Heart left ventricle (tissue), 16 donors: ENCODE measurements at regions of chr1 and their contacts with region 1.

Region 1: DNA sequence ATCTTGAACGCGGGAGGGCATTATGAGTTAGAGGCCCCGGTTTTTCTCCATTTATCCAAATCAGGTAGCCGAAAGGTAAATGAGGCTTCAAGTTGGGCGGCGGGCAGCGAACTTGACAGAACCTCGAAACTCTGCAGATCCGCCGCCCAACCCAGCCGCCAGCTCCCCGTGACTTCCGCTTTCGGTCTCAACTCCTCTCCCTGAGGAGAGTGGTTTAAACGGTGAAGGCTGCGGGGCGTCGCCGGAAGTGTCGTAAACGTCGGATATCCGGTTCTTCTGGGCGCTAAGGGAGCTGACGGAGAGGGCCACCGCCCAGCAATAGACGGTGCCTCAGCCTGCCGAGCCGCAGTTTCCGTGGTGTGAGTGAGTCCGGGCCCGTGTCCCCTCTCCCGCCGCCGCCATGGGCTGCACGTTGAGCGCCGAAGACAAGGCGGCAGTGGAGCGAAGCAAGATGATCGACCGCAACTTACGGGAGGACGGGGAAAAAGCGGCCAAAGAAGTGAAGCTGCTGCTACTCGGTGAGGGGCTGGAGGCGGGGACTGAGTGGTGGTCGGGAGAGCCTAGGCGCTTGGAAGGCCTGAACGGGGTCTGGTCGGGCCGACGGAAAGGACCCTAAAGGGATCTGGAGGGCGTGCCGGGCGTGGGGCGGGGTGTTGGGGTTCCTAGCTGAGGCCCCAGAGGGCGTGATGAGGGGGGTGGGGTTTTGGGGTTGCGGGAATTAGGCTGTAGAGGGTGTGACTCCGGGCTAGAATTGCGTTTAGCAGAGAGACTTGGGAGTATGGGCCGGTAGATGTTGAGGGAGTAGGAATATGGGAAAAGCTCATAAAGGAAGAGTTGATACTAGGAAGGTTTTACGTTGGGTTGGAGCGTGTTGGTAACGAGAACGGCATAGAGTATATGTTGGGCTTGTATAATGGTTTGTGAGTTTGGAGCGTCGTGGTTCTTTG is at the start of gene GNAI3:
- DNase-seq: peak; percentile 95 to 97 (median 97)
- ATAC-seq: peak; percentile 98 to 99 (median 98)
- H3K4me3 ChIP-seq: peak within 1 kb of the TSS; percentile 61 to 98 (median 90)
- H3K27ac ChIP-seq: peak within 1 kb of the TSS; percentile 85 to 99 (median 94)
- H3K4me1 ChIP-seq: peaks cover 0 to 51% (median 34%) of the 10 kb centered on the region in 12 donors
- H3K27me3 ChIP-seq: no peaks in the 10 kb centered on the region
- CTCF ChIP-seq: no peak
- POLR2A ChIP-seq: peak; percentile 71 to 97
- total RNA-seq, gene GNAI3: 1.5 to 5.4 (median 2.5) TPM

Region 2: DNA sequence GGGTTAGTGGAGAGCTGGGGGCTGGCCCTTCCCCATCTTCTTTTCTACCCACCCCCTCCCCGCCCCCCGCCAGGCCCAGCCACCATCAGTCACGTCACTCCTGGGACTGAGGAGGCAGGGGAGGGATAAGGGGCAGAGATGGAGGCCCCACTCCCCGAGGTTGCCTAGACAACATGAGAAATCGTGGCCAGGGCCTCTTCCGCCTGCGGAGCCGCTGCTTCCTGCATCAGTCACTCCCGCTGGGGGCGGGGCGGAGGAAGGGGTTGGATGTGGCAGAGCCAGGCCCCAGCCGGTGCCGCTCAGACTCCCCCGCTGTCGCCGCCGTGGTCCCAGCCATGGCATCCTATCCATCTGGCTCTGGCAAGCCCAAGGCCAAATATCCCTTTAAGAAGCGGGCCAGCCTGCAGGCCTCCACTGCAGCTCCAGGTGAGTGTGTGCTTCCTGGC is 72.3 kb after region 1 on chr1:
- intact Hi-C with region 1: loop called in 5 of 10 experiments (anchors 2 to 10 kb)
- DNase-seq: peak; percentile 93 to 97 (median 96)
- ATAC-seq: peak; percentile 67 to 87 (median 79)
- H3K4me3 ChIP-seq: peak overlapping the region; percentile 46 to 86 (median 68)
- H3K27ac ChIP-seq: peak overlapping the region; percentile 28 to 96 (median 80)
- H3K4me1 ChIP-seq: peaks cover 0 to 84% (median 34%) of the 10 kb centered on the region in 12 donors
- H3K27me3 ChIP-seq: no peaks in the 10 kb centered on the region
- CTCF ChIP-seq: no peak
- POLR2A ChIP-seq: no peak

Region 3: DNA sequence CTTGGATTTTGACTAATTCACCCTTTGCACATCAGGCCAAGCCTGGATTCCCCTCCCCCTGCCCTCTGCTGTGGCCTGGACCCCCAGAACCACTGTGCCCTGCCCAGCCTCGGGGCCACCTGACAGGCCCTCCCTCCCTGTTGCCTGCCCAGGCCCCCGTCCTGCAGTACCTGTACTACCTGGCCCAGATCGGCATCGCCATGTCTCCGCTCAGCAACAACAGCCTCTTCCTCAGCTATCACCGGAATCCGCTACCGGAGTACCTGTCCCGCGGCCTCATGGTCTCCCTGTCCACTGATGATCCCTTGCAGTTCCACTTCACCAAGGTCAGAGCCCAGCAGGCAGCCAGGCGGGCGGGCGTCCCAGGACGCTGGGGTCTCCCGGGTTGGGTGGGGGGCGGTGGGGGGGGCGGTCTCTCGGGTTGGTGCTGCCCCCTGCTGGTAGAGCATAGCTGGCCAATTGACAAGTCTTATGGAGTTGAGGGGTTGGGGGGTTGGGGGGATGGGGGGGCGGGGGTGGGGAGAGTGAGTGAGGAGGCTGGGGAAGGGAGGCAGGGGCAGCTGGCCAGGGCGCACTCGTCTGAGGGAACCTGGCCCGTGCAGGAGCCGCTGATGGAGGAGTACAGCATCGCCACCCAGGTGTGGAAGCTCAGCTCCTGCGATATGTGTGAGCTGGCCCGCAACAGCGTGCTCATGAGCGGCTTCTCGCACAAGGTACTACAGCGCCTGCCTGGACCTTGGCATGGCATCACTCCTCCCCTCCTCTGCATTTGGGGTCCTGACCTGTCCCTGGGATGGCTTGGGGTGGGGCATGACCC is 81.7 kb after region 1 on chr1:
- intact Hi-C with region 1: loop called in 6 of 10 experiments (anchors 2 to 5 kb)
- DNase-seq: peak in 1 of 5 donors; percentile 43
- ATAC-seq: no peak
- H3K4me3 ChIP-seq: no peak overlapping the region
- H3K27ac ChIP-seq: no peak overlapping the region
- H3K4me1 ChIP-seq: peaks cover 0 to 15% (median 0%) of the 10 kb centered on the region in 12 donors
- H3K27me3 ChIP-seq: no peaks in the 10 kb centered on the region
- CTCF ChIP-seq: peak in 10 of 12 donors; percentile 15 to 43 (median 34)
- POLR2A ChIP-seq: no peak

Region 4: DNA sequence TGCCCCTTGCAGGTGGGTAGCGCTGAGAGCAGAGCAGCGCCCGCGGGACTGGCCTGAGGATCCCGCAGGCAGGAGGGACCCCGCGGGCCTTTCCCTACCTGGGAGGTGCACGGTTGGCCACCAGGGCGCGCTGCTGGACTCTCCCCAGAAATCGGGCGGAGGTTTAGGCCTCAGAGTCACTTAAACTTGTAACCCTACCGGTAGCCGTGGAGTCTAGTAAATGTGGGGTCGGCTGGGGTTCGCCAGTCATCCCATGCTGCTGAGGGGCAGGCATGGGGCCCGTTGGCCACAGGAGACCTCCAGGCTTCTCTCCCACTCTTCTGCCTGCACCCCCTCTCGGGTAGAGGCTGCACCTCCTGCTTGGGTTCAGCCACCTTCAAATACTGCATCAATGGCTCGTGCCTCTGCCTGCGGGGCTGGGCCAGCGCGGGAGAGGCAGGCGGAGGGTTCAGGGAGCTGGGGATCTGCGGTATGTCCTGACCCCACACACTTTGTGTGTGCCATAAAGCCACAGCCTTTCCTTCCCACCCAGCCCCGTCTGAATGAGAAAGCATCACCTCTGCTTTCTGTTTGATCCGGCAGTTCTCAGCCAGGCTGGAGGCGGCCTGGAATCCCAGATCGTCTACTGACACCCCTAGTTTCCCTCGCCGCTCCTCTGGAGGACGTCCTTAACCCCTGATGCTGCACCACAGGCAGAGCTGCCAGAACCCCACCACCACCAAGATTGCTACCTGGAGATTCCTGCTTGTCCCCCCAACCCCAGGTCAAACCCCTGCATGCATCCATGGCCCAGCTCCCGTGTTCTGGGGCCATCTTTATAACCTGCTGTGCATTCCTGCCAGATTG is 95.0 kb after region 1 on chr1:
- intact Hi-C with region 1: loop called in 5 of 10 experiments (anchors 5 kb)
- DNase-seq: peak; percentile 78 to 93 (median 85)
- ATAC-seq: peak; percentile 84 to 93 (median 88)
- H3K4me3 ChIP-seq: no peak overlapping the region
- H3K27ac ChIP-seq: peak overlapping the region in 1 of 12 donors; percentile 25
- H3K4me1 ChIP-seq: peaks cover 0 to 12% (median 7%) of the 10 kb centered on the region in 12 donors
- H3K27me3 ChIP-seq: no peaks in the 10 kb centered on the region
- CTCF ChIP-seq: peak; percentile 75 to 92 (median 84)
- POLR2A ChIP-seq: no peak

Region 5: DNA sequence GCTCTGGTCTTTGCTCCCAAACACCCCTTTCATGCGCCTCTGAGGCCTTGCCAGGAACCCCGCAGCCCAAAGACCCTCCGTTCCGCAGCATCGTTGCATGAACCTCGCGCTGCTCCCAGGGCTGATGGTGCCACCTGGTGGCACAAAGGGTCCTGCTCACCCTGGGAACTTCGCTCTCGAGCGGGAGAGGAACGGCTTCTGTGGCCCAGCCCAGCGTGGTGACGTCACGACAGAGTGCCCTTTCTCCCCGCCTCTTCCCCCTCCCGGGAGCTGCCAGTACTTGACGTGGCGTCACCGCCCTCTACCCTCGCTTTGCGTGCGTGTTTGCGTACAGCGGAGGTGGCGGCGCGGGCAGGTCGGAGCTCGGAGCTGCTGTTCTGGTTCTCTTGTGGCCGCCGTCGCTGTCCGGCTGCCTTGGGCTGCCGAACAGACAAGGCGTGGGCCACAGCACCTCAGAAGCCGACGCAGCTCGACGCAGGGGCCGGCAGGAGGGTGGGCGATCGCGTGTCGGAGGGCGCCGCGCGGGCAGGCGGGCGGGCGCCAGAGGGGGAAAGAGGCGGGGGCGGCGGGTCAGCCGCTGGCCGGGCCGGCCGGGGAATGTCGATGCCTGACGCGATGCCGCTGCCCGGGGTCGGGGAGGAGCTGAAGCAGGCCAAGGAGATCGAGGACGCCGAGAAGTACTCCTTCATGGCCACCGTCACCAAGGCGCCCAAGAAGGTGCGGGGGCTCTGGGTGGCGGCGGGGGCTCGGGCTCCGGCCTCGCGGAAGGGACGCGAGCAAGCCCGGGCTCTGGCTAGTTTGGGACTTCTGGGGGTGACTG is 436.1 kb after region 1 on chr1 and contains the start of gene AHCYL1:
- intact Hi-C with region 1: loop called in 9 of 10 experiments (anchors 2 to 10 kb)
- DNase-seq: peak; percentile 100
- ATAC-seq: peak; percentile 96 to 98 (median 98)
- H3K4me3 ChIP-seq: peak within 1 kb of the TSS; percentile 61 to 97 (median 93)
- H3K27ac ChIP-seq: peak within 1 kb of the TSS; percentile 90 to 99 (median 98)
- H3K4me1 ChIP-seq: peaks cover 9 to 64% (median 55%) of the 10 kb centered on the region in 12 donors
- H3K27me3 ChIP-seq: no peaks in the 10 kb centered on the region
- CTCF ChIP-seq: peak; percentile 96 to 100 (median 98)
- POLR2A ChIP-seq: peak; percentile 95 to 98
- total RNA-seq, gene AHCYL1: 31.1 to 56.7 (median 48.7) TPM

Region 6: DNA sequence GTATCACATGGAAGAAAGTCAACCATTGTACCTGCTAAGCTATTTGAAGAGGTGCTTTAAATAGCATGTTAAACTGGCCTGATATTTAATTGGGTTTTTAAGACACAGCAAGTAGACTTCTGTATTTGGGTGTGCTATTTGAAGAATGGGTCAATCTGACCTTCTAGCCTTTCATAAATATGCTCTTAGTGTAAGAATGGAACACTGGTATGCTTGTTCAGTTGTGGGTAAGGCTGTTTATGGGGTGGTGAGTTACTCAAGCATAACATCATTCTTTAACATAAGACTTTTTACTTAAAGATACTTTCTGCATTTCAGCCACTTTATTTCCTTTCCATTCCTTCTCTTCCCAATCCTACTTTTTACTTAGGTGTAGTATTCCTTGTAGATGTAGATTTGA is 457.4 kb after region 1 on chr1:
- intact Hi-C with region 1: loop called in 1 of 10 experiments (anchors 5 kb)
- DNase-seq: no peak
- ATAC-seq: peak in 1 of 4 donors; percentile 39
- H3K4me3 ChIP-seq: no peak overlapping the region
- H3K27ac ChIP-seq: peak overlapping the region in 4 of 12 donors; percentile 20 to 73 (median 42)
- H3K4me1 ChIP-seq: peaks cover 5 to 59% (median 50%) of the 10 kb centered on the region in 12 donors
- H3K27me3 ChIP-seq: no peaks in the 10 kb centered on the region
- CTCF ChIP-seq: no peak
- POLR2A ChIP-seq: no peak